Mammary epithelial cell (primary cell): ENCODE measurements at regions of chr7 and their contacts with region 1.

Region 1: GRCh38 chr7:92768501-92769393 is 67.6 kb downstream of the CDK6 start:
- DNase-seq: peak; percentile 71
- H3K4me3 ChIP-seq: no peak overlapping the region
- H3K27ac ChIP-seq: no peak overlapping the region
- H3K4me1 ChIP-seq: peaks cover 42% of the 10 kb centered on the region
- H3K27me3 ChIP-seq: no peaks in the 10 kb centered on the region
- CTCF ChIP-seq: no peak

Region 2: DNA sequence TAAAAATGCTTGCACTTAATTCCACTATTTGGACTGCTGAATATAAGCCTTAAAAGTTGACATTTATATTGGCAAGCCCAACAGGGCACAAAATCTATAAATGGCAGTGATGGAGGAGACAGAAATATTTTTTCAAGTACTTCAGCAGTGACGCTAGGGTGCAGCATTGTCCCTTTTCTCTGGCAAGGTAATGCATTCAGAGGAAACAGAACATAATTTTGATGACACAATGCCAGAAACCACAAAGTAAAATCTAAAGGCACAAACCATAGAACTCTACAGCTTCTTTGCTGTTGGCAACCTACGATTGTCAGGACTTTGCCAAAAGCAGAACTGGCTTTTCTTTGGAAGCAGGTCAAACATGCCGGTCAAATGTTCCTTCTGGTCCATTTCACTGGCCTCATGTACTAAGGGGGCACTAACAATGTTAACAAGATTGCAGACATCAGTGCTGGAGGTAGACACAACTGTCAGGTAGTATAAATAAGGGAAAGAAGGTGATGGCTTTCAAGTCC is 147.7 kb before region 1 on chr7:
- CTCF ChIA-PET with region 1: no interaction called
- dilution Hi-C with region 1: no loop called
- in situ Hi-C with region 1: no loop called
- intact Hi-C with region 1: loop called (anchors 2 kb)
- DNase-seq: peak; percentile 78
- H3K4me3 ChIP-seq: no peak overlapping the region
- H3K27ac ChIP-seq: peak overlapping the region; percentile 54
- H3K4me1 ChIP-seq: peaks cover 36% of the 10 kb centered on the region
- H3K27me3 ChIP-seq: no peaks in the 10 kb centered on the region
- CTCF ChIP-seq: peak; percentile 67 to 72

Region 3: DNA sequence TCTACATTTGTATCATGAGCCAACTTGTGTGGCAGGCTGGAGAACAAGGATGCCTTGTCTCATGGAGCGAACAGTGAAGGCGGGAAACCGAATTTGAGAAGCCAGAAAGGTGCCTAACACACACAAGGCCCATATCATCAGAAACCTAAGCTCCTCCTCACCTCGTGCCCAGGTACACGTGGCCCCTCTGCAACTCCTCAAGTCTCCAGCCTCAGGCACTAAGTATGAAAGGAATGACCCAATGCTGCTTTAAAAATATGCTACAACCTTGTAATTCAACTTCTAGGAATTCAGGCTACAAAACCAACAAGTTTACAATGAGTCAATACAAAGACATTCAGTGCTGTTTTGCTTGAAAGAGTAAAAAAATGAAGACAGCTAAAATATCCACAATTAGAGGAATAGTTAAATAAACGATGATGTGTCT is 28.0 kb before region 1 on chr7:
- CTCF ChIA-PET with region 1: no interaction called
- dilution Hi-C with region 1: no loop called
- in situ Hi-C with region 1: no loop called
- intact Hi-C with region 1: loop called (anchors 2 kb)
- DNase-seq: peak; percentile 94
- H3K4me3 ChIP-seq: no peak overlapping the region
- H3K27ac ChIP-seq: peak overlapping the region; percentile 70
- H3K4me1 ChIP-seq: peaks cover 34% of the 10 kb centered on the region
- H3K27me3 ChIP-seq: no peaks in the 10 kb centered on the region
- CTCF ChIP-seq: no peak

Region 4: DNA sequence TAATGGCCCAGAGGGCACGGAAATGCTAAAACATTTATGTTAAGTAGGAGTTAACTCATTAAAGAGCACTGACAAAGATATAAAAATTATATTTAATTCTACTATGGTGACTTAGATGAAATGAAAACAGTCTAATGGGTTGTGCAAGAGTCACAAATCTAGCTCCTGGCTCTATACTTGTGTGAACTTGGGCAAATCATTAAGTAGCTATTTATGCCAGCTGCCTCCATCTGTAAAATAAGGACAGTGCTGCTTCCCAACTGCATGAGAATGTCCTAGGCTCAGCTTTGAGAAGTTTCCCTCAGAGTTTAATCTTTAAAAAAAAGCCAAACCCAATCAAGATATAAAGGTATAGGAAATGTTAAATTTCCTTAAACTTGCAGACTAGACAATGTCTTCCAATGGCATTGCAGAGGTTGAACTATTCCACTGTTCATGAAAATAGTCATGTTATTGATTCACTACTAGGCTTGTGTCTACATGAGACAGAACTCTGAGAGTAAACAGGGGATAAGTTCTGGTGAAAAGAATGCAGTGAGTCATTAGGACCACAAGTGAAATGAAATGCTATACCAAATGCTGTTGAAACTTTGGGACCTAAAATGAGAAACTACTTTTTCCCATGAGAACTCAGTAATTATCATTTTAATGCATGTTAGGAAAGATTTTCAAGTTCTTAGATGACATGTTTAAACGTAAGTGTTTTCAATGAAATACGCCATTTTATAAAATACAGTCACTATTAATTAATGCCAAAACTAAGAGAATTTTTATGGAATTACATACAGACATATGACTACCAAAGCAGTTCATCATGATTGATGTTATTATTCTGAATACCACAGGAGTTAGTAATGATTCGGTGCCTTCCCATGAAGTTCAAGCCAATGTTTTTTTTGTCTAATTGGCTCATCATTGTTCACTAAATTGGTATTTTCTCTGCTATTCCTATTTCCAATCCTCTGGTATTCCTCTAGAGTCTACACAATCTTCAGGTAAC is 16.5 kb before region 1 on chr7:
- CTCF ChIA-PET with region 1: no interaction called
- dilution Hi-C with region 1: no loop called
- in situ Hi-C with region 1: no loop called
- intact Hi-C with region 1: loop called (anchors 1 kb)
- DNase-seq: peak; percentile 94
- H3K4me3 ChIP-seq: peak overlapping the region in 1 of 3 experiments; percentile 19
- H3K27ac ChIP-seq: peak overlapping the region; percentile 88
- H3K4me1 ChIP-seq: peaks cover 65% of the 10 kb centered on the region
- H3K27me3 ChIP-seq: no peaks in the 10 kb centered on the region
- CTCF ChIP-seq: no peak

Region 5: GRCh38 chr7:92880212-92881090 is 111.7 kb after region 1 on chr7:
- CTCF ChIA-PET with region 1: no interaction called
- dilution Hi-C with region 1: no loop called
- in situ Hi-C with region 1: no loop called
- intact Hi-C with region 1: no loop called
- DNase-seq: peak; percentile 18
- H3K4me3 ChIP-seq: no peak overlapping the region
- H3K27ac ChIP-seq: no peak overlapping the region
- H3K4me1 ChIP-seq: peaks cover 9% of the 10 kb centered on the region
- H3K27me3 ChIP-seq: no peaks in the 10 kb centered on the region
- CTCF ChIP-seq: peak in 1 of 2 donors; percentile 14

Region 6: GRCh38 chr7:92904292-92905131 is 135.8 kb after region 1 on chr7:
- CTCF ChIA-PET with region 1: no interaction called
- dilution Hi-C with region 1: no loop called
- in situ Hi-C with region 1: no loop called
- intact Hi-C with region 1: loop called (anchors 10 kb)
- DNase-seq: peak; percentile 98
- H3K4me3 ChIP-seq: no peak overlapping the region
- H3K27ac ChIP-seq: peak overlapping the region; percentile 96
- H3K4me1 ChIP-seq: peaks cover 23% of the 10 kb centered on the region
- H3K27me3 ChIP-seq: no peaks in the 10 kb centered on the region
- CTCF ChIP-seq: no peak